ENCODE measurements at regions of chr12 and their contacts with region 1.

Region 1: GRCh38 chr12:57829025-57829777 is 10.7 kb upstream of the AVIL start:
- DNase-seq: no peak
- H3K4me3 ChIP-seq: no peak overlapping the region
- CTCF ChIP-seq: no peak

Region 2: DNA sequence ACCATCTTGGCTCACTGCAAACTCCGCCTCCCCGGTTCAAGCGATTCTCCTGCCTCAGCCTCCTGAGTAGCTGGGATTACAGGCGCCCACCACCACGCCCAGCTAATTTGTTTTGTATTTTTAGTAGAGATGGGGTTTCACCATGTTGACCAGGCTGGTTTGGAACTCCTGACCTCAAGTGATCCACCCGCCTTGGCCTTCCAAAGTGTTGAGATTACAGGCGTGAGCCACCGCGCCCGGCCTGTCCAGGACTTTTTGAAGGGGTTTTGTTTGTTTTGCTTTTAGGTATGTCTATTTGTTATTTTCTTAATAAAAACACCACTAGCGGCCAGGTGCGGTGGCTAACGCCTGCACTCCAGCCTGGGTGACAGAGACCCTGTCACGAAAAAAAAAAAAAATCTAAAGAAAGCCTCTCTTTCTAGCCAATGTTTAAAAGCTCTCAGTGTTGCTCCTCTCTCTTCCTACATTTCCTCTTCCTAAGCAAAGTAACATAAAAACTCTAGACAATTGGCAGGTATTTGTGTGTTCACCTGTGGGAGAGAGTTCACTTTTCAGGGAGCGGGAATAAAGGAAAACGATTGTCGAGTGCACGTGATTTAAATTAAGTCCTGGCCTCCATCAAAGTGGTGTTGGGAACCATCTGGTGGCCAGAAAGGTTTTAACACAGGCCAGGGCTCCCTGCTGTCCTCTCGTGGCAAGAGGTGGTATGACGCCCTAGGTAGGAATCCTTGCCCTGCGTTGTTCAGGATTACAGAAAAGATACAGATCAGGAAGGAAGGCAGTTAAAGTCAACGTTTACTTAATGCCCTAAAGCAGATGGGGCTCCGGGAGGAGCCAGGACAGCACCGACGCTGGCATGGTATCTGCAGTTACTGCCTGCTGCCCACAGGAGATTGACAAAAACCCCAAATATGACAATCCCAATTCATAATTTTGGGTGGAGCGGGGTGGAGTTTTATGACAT is 75.9 kb after region 1 on chr12:
- in situ Hi-C with region 1: loop called (anchors 5 kb)
- DNase-seq: peak; percentile 85
- H3K4me3 ChIP-seq: no peak overlapping the region
- CTCF ChIP-seq: peak; percentile 100

Measured in astrocyte of the cerebellum (primary cell).